Left lung (tissue), 14 donors: ENCODE measurements at regions of chr2 and their contacts with region 1.

Region 1: DNA sequence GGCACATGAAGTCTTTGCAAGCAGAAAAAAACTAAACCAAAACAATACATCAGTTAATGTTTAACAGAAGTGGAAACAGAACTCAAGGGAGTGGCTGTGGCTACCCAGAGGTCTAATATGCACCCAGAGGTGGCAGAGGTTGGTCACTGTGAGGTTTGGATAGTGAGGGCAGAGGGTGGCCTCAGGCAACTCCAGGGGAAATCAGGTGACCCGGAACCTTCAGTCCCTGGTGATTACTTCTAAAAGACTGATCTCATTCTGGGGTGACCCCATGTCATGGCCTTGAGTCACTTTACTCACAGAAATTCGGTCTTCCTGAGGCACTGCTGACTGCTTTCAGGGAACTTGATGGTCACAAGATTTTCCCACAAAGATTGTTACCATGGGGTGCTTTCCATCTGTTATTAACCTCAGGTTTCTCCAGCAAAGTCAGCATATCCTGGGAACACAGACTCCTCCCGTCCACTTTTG is 99.4 kb downstream of the TMEM17 start:
- DNase-seq: no peak
- ATAC-seq: peak; percentile 9
- H3K4me3 ChIP-seq: no peak overlapping the region
- H3K27ac ChIP-seq: no peak overlapping the region
- H3K4me1 ChIP-seq: peaks cover 2 to 9% of the 10 kb centered on the region in 2 donors
- H3K27me3 ChIP-seq: no peaks in the 10 kb centered on the region
- CTCF ChIP-seq: no peak

Region 2: GRCh38 chr2:61910603-61911002 is 496.0 kb before region 1 on chr2:
- intact Hi-C with region 1: loop called in 1 of 2 experiments (anchors 10 kb)
- DNase-seq: no peak
- ATAC-seq: no peak
- H3K4me3 ChIP-seq: no peak overlapping the region
- H3K27ac ChIP-seq: no peak overlapping the region
- H3K4me1 ChIP-seq: peaks cover 0 to 24% of the 10 kb centered on the region in 2 donors
- H3K27me3 ChIP-seq: no peaks in the 10 kb centered on the region
- CTCF ChIP-seq: no peak